ENCODE measurements at regions of chr4 and their contacts with region 1.

Region 1: DNA sequence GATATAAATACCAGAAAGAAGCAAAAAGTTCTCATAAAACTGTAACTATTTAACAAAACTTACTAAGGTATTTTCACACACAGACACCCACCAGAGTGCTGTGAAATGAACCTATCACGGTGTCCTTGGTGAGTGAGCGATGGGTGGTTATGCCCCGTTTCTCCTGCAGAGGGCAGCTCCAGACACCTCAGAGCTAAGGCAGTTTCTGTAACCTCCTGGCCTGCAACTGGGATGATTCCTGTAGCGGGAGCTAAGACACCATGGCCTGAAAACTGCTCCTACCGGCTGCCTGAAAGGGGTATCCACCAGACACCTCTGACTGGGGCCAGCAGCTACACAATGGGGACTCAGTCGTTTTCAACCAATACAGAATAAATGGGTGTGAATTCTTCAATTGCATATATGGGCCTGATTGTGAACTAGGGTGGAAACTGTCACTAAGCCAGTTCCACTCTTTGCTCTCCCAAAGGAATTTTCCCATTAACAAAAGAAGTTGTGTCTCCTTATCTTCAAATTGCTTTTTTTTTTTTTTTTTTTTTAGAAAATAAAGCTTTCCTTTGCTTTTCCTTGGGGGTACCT is 2375.8 kb upstream of the TENM3 start:
- DNase-seq: peak; percentile 82
- H3K4me3 ChIP-seq: no peak overlapping the region
- H3K27ac ChIP-seq: no peak overlapping the region
- H3K4me1 ChIP-seq: no peaks in the 10 kb centered on the region
- CTCF ChIP-seq: peak; percentile 97

Region 2: DNA sequence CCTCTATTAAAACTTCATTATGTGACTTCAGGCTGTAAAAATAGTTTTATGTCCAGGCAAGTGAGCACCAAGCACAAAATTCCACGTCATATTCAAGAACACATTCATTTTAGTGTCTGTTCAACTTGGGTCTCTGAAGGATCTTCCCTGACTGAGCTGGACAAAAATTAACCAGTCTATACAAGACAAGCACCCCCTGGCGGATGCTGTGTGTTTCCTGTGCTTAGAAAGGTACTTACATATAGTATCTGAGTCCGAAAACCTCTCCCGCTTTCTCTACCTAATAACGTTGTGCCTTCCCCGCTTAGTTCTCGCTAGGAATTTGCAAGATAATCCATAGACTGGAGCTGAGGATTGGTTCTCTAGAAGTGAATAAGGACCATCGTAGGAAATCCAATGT is 161.3 kb after region 1 on chr4:
- CTCF ChIA-PET with region 1: interaction called, 6 read pairs
- POLR2A ChIA-PET with region 1: no interaction called
- intact Hi-C with region 1: loop called (anchors 1 kb)
- DNase-seq: peak; percentile 84
- H3K4me3 ChIP-seq: no peak overlapping the region
- H3K27ac ChIP-seq: no peak overlapping the region
- H3K4me1 ChIP-seq: no peaks in the 10 kb centered on the region
- CTCF ChIP-seq: peak; percentile 81